Ascending aorta (tissue), 2 donors: ENCODE measurements at regions of chr15 and their contacts with region 1.

Region 1: GRCh38 chr15:80173022-80173759 is 20.4 kb downstream of the FAH start:
- DNase-seq: peak; percentile 27 to 86
- H3K4me3 ChIP-seq: no peak overlapping the region
- H3K27ac ChIP-seq: peak overlapping the region; percentile 91 to 93
- H3K4me1 ChIP-seq: peaks cover 25 to 30% of the 10 kb centered on the region in 2 donors
- H3K27me3 ChIP-seq: no peaks in the 10 kb centered on the region
- CTCF ChIP-seq: peak; percentile 53 to 68 (median 66)

Region 2: DNA sequence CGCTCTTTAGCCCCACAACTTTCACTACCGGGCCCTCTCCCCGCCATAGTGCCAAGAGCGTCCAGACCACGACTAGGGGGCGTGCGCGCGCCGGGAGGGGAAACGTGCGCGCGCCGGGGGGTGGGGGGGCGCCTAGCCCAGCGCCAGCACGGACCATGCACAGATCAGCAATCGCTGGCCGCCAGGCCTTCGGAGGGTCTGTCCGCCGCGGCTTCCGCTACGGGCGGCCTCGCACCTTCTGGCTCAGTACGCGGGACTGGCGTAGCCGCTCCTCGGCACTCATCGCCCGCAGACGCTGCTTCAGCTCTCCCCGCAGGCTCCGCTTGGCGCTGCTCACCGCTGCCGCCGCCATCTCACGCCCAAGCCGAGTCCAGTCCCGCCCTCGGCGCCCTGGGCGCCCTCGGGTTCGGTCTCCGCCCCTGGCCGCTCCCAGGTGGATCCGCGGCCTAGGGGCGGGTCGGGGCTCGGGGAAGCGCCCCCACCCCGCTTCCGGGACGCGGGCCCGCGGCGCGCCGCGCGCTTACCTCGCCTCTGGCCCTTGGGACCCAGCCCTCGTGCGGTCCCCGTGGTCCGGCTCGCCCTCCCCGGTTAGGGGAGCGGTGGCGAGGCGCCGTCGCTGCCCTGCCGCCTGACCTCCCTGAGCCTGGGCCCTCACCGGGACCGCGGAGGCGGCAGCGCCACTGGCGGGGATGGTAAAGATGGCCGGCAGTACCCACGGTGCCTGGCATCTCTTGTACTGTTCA is 276.4 kb before region 1 on chr15 and contains the start of gene MTHFS:
- intact Hi-C with region 1: loop called (anchors 5 kb)
- DNase-seq: peak; percentile 22 to 78
- H3K4me3 ChIP-seq: peak within 1 kb of the TSS; percentile 74 to 83
- H3K27ac ChIP-seq: peak within 1 kb of the TSS; percentile 96 to 97
- H3K4me1 ChIP-seq: no peaks in the 10 kb centered on the region
- H3K27me3 ChIP-seq: no peaks in the 10 kb centered on the region
- CTCF ChIP-seq: peak; percentile 29 to 69 (median 66)
- total RNA-seq, gene MTHFS: 0.75 TPM

Region 3: GRCh38 chr15:80058851-80059785 is 114.1 kb before region 1 on chr15 and contains the start of gene ZFAND6:
- intact Hi-C with region 1: loop called (anchors 1 kb)
- DNase-seq: peak; percentile 78 to 97
- H3K4me3 ChIP-seq: peak within 1 kb of the TSS; percentile 87 to 96
- H3K27ac ChIP-seq: peak within 1 kb of the TSS; percentile 77 to 94
- H3K4me1 ChIP-seq: peaks cover 0 to 22% of the 10 kb centered on the region in 2 donors
- H3K27me3 ChIP-seq: no peaks in the 10 kb centered on the region
- CTCF ChIP-seq: peak in 1 of 3 experiments; percentile 6
- total RNA-seq, gene ZFAND6: 49.6 TPM

Region 4: DNA sequence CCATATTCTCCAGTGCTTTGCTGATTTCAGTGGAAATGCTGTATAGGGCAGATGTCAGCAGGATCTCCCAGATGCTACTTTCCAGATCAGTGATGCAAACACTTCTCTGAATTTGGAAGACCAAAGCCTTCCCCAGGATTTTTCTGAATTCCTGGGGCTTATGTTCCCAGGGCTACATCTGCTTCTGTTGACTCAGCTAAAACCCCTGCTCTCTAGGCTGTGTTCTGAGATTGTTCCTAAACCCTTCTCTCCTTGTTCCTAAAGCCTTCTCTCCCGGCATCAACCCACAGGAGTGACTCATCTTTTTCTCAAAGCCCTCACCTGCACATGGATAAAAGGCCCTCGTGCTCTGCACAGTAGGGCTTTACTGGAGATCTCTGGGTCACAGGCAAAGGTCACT is 15.1 kb after region 1 on chr15:
- intact Hi-C with region 1: no loop called
- DNase-seq: no peak
- H3K4me3 ChIP-seq: no peak overlapping the region
- H3K27ac ChIP-seq: no peak overlapping the region
- H3K4me1 ChIP-seq: peaks cover 0 to 1% of the 10 kb centered on the region in 2 donors
- H3K27me3 ChIP-seq: no peaks in the 10 kb centered on the region
- CTCF ChIP-seq: no peak

Region 5: GRCh38 chr15:80480909-80481308 is 307.7 kb after region 1 on chr15:
- intact Hi-C with region 1: loop called (anchors 10 kb)
- DNase-seq: peak in 1 of 2 donors; percentile 86
- H3K4me3 ChIP-seq: no peak overlapping the region
- H3K27ac ChIP-seq: peak overlapping the region; percentile 42 to 71
- H3K4me1 ChIP-seq: peaks cover 3 to 19% of the 10 kb centered on the region in 2 donors
- H3K27me3 ChIP-seq: no peaks in the 10 kb centered on the region
- CTCF ChIP-seq: no peak